Activated CD4-positive, alpha-beta memory T cell treated with anti-CD3 and anti-CD28 coated beads, Interleukin-2, amount 10 ng/mL, durations not matched to agents 7 days and 5 days (primary cell): ENCODE measurements at regions of chr17 and their contacts with region 1.

Region 1: DNA sequence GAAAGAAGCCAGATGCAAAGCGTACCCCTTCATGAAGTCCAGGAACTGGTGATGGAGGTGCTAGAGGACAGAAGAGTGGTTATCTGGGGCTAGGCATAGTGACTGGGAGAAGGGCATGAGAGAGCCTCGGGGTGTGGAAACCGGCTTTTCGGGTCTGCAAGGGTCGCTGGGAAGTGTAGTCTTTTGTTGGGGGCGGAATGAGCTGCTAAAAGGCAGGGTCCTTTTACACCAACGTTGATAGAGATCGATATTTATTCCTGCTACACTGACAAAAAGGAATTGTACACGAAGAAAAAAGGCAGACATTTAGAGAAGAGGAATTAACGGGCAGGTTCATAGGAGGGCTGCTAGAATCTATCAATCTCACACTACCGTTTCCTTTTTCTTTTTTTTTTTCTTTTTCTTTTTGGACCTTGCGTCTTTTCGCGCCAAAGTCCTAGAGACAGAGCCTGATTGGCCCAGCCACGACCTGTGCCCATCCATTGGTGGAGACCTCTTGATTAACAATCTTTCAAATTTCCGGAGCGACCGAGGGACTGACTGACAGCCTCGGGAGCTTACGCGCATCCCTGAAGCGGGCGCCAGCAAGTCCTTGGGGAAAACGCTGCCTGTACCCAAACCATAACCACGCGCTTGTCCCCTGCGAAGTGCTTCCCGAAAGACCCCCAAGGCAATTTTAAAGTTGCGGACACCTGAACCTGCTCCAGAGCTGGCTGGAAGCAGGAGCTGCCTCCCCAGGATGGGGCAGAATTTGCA is 27.7 kb upstream of the DHRS7B start:
- DNase-seq: peak; percentile 84
- H3K4me3 Mint-ChIP-seq: peak overlapping the region; percentile 87
- H3K27ac Mint-ChIP-seq: peak overlapping the region; percentile 86
- H3K4me1 Mint-ChIP-seq: peaks cover 24% of the 10 kb centered on the region
- H3K27me3 Mint-ChIP-seq: no peaks in the 10 kb centered on the region

Region 2: GRCh38 chr17:21019976-21020586 is 79.0 kb before region 1 on chr17:
- CTCF ChIA-PET with region 1: interaction called, 19 read pairs
- POLR2A ChIA-PET with region 1: interaction called, 3 read pairs
- DNase-seq: peak; percentile 61
- H3K4me3 Mint-ChIP-seq: no peak overlapping the region
- H3K27ac Mint-ChIP-seq: no peak overlapping the region
- H3K4me1 Mint-ChIP-seq: peaks cover 25% of the 10 kb centered on the region
- H3K27me3 Mint-ChIP-seq: no peaks in the 10 kb centered on the region

Region 3: GRCh38 chr17:21034340-21035235 is 64.5 kb before region 1 on chr17:
- CTCF ChIA-PET with region 1: interaction called, 11 read pairs
- POLR2A ChIA-PET with region 1: interaction called, 19 read pairs
- DNase-seq: peak; percentile 70
- H3K4me3 Mint-ChIP-seq: peak overlapping the region; percentile 77
- H3K27ac Mint-ChIP-seq: peak overlapping the region; percentile 93
- H3K4me1 Mint-ChIP-seq: peaks cover 83% of the 10 kb centered on the region
- H3K27me3 Mint-ChIP-seq: no peaks in the 10 kb centered on the region

Region 4: GRCh38 chr17:21119247-21119918 is 20.3 kb after region 1 on chr17:
- CTCF ChIA-PET with region 1: interaction called, 31 read pairs
- POLR2A ChIA-PET with region 1: interaction called, 4 read pairs
- DNase-seq: peak; percentile 76
- H3K4me3 Mint-ChIP-seq: no peak overlapping the region
- H3K27ac Mint-ChIP-seq: no peak overlapping the region
- H3K4me1 Mint-ChIP-seq: peaks cover 10% of the 10 kb centered on the region
- H3K27me3 Mint-ChIP-seq: peaks cover 4% of the 10 kb centered on the region

Region 5: GRCh38 chr17:21126645-21127510 is 27.8 kb after region 1 on chr17 and contains the start of gene DHRS7B:
- CTCF ChIA-PET with region 1: interaction called, 31 read pairs
- POLR2A ChIA-PET with region 1: interaction called, 5 read pairs
- DNase-seq: peak; percentile 97
- H3K4me3 Mint-ChIP-seq: peak within 1 kb of the TSS; percentile 89
- H3K27ac Mint-ChIP-seq: peak within 1 kb of the TSS; percentile 86
- H3K4me1 Mint-ChIP-seq: peaks cover 35% of the 10 kb centered on the region
- H3K27me3 Mint-ChIP-seq: no peaks in the 10 kb centered on the region
- total RNA-seq, gene DHRS7B: 12.1 to 15.3 TPM

Region 6: GRCh38 chr17:21171309-21171922 is 72.3 kb after region 1 on chr17:
- CTCF ChIA-PET with region 1: no interaction called
- POLR2A ChIA-PET with region 1: no interaction called
- DNase-seq: no peak
- H3K4me3 Mint-ChIP-seq: no peak overlapping the region
- H3K27ac Mint-ChIP-seq: no peak overlapping the region
- H3K4me1 Mint-ChIP-seq: peaks cover 14% of the 10 kb centered on the region
- H3K27me3 Mint-ChIP-seq: no peaks in the 10 kb centered on the region

Region 7: DNA sequence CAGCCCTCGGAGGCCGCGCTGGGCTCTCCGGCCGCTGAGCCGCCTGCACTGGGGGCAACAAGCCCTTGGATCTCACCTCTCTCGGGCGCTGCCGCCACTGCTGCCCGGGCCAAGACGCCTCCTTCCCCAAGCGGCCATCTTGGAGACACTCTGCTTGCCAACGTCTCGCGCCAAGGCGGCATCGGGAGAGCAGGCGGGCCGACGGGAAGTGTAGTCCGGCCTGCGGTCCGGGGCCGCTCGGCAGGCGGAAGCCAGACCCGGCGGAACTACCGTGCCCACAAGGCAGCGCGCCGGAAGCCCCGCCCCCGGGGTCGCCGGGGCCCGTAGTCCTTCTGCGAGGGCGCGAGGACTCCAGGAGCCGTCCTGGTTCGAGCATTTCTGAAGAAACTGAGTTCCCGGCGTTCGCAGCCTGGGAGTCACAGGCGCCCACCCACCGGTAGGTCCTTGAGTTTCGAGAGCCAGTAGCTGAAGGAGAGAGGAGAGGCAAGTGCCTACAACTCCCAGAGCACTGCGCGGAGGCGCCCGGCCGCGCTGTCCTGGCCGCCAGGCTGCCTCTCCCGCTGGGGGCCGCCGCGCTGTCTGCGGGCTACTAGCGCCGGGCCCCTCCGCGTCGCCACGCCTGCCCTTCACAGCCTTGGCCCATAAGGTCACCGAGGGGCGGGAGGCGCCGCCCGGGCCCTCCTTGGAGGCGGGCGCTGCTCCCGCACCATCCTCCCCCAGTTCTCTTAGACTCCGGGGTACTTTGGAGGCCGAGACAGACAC is 115.1 kb after region 1 on chr17 and contains the start of gene TMEM11:
- CTCF ChIA-PET with region 1: interaction called, 4 read pairs
- POLR2A ChIA-PET with region 1: interaction called, 12 read pairs
- DNase-seq: peak; percentile 96
- H3K4me3 Mint-ChIP-seq: peak within 1 kb of the TSS; percentile 86
- H3K27ac Mint-ChIP-seq: peak within 1 kb of the TSS; percentile 81
- H3K4me1 Mint-ChIP-seq: peaks cover 66% of the 10 kb centered on the region
- H3K27me3 Mint-ChIP-seq: no peaks in the 10 kb centered on the region
- total RNA-seq, gene TMEM11: 23.2 to 23.3 TPM